ENCODE measurements at regions of chr12 and their contacts with region 1.

Region 1: GRCh38 chr12:49580572-49581535 is 12.9 kb upstream of the MCRS1 start:
- DNase-seq: peak; percentile 36
- H3K4me3 Mint-ChIP-seq: no peak overlapping the region
- H3K27ac Mint-ChIP-seq: peak overlapping the region; percentile 3
- H3K4me1 Mint-ChIP-seq: peaks cover 23% of the 10 kb centered on the region
- H3K27me3 Mint-ChIP-seq: no peaks in the 10 kb centered on the region

Region 2: DNA sequence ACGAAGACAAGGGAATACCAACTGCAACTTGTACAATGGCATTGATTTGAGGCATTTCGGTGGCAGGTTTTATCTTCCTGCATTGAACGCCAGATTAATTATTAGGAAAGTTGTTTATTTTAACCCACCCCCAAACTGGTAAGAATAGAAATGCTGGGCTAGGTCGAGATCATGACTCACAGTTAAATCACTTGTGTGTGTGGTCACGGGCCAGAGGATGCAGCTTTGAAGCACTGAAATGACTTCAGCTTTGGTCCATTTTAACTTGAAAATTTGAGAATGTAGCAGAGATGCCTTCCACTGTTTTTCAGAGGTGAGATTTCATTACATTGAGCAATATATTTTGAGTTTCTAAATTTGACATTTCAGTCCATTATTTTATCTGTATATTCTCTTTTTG is 65.6 kb before region 1 on chr12:
- intact Hi-C with region 1: loop called (anchors 5 kb)
- DNase-seq: no peak
- H3K4me3 Mint-ChIP-seq: no peak overlapping the region
- H3K27ac Mint-ChIP-seq: no peak overlapping the region
- H3K4me1 Mint-ChIP-seq: peaks cover 9% of the 10 kb centered on the region
- H3K27me3 Mint-ChIP-seq: no peaks in the 10 kb centered on the region

Region 3: GRCh38 chr12:49553512-49554088 is 27.3 kb before region 1 on chr12:
- intact Hi-C with region 1: loop called (anchors 1 kb)
- DNase-seq: no peak
- H3K4me3 Mint-ChIP-seq: no peak overlapping the region
- H3K27ac Mint-ChIP-seq: no peak overlapping the region
- H3K4me1 Mint-ChIP-seq: no peaks in the 10 kb centered on the region
- H3K27me3 Mint-ChIP-seq: peaks cover 16% of the 10 kb centered on the region

Region 4: DNA sequence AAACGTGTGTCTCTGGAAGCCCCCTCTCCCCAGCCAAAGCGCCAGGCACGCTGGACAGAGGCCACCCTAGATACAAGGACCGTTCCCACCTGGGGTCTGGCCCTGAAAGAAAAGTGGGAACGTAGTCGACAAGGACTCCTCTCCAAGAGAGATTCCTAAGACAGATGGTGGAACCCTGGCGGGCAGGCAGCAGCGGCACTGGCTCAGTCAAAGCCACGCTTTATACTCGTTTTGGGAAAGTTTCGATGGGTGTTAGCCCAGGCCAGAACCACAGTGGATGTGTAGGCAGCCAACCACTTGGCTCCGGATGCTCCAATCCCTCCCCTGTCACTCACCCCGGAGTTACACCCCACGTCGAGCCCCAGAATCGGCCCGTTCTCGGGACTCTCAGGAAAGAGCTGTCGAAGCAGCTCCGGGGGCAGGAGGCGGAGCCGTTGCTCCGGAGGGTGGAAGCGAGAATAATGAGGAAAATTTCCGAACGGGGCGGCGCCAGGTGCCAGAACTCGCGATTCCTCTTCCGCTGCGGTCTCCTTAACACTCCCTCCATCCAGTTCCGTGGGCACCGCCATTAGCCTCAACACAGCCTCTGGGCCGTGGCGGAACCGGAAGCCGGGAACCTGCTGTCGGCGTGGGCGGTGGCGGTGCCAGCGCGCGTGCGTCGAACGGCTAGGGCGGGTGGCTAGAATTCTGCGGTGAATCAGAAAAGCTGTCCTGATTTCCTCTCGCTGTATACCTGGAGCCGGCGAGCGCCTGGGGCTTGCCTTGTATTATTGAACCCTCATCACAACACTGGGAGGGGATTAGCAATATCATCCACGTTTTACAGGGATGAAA is 261.9 kb after region 1 on chr12 and contains the start of gene BCDIN3D:
- intact Hi-C with region 1: no loop called
- DNase-seq: peak; percentile 91
- H3K4me3 Mint-ChIP-seq: peak within 1 kb of the TSS; percentile 91
- H3K27ac Mint-ChIP-seq: peak within 1 kb of the TSS; percentile 84
- H3K4me1 Mint-ChIP-seq: peaks cover 29% of the 10 kb centered on the region
- H3K27me3 Mint-ChIP-seq: peaks cover 1% of the 10 kb centered on the region
- total RNA-seq, gene BCDIN3D: 3.6 and 4.0 TPM in 2 replicates